Right ventricle myocardium inferior (tissue), 1 donor: ENCODE measurements at regions of chr1 and their contacts with region 1.

Region 1: DNA sequence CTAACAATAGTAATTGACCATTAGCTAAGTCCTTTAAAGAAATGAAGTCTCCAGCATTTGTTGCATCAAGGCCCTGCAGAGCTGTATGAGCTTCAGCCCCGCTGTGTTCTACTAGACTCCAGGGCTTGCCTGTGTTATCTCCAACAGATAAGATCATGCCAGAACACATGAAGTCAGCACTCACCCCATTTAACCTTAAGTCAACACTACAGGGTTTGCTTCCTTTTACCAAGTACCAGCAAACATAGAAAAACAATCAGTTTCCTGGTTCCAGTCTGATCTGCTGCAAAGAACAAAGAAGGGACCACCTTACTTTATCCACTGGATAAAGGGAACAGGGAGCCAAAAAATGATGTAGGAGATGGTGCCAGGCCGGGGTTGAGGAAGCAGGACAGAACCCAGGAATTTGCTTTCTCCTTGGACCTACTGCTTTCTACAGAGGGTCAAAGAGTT is 41.3 kb upstream of the ENAH start:
- DNase-seq: peak; percentile 74
- ATAC-seq: peak; percentile 96

Region 2: GRCh38 chr1:225441314-225442122 is 252.7 kb before region 1 on chr1:
- intact Hi-C with region 1: no loop called
- DNase-seq: no peak
- ATAC-seq: no peak

Region 3: DNA sequence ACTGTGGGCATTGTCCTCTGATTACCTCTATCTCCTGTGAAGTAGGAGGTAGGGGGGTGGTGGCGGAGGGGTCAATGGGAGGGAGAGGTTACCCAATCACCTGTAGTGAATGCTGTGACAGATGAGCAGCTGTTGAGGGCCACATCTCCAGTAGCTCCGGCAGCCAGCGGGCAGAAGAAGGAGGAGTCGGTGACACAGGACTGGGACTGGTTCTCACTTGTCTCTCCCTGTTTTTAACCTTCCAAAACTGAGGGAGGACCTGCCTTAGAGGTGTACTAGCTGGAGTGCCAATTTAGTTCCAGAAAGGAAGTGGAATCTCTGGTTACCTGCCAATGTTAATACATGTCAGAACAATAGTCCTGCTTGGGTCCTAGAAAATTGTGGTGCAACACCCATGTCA is 14.9 kb after region 1 on chr1:
- intact Hi-C with region 1: loop called (anchors 1 kb)
- DNase-seq: no peak
- ATAC-seq: no peak

Region 4: GRCh38 chr1:225733254-225733653 is 39.1 kb after region 1 on chr1:
- intact Hi-C with region 1: loop called (anchors 5 kb)
- DNase-seq: no peak
- ATAC-seq: no peak

Region 5: DNA sequence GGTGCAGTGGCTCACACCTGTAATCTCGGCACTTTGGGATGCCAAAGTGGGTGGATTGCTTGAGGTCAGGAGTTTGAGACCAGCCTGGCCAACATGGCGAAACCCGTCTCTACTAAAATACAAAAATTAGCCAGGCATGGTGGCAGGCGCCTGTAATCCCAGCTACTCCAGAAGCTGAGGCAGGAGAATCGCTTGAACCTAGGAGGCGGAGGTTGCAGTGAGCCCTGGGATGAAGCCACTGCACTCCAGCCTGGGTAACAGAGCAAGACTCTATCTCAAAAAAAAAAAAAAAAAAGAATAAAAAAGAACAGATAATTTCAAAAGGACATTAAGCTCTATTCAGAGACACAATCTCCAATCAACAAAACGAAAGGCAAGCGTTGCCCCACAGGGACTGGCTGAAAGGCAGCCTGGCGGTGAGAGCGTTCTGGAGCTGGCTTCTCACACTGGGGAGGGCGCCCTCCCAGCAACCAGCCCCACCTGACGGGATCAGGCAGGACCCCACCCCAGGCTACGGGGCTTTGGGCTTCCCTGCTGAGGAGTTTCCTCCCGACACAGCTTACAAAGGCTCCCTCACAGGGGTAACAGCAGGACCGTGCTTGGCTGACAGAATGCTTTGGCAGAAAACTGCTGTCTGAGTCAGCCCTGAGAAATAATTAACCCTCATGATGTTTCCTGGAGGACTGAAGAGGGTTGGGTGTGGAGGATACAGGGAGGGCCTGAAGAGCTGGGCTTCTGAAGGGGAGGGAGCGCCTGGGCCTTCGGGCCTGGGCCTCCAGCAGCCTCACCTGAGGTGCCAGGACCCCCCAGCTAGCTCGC is 52.4 kb after region 1 on chr1:
- intact Hi-C with region 1: loop called (anchors 5 kb)
- DNase-seq: peak; percentile 77
- ATAC-seq: peak; percentile 94

Region 6: DNA sequence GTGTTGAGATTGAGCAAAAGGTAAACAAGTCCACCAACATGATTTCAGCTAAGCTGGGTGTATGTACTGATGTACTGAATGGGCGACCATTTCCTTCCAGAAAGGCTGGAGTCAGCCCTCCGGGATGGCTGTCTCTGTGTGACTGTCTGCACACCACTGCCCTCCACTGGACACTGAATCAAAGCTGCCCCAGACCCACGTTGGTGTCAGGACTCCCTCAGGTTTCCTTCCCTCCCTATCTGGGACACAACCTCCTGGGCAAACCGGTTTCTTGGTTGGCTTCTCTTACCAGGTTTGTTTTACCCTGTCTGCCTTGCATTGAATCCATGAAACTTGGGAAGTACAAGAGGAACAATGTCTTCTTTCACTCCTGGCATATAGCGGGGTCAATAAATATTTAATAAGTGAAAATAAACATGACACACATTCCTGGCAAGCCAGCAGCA is 78.2 kb after region 1 on chr1:
- intact Hi-C with region 1: loop called (anchors 5 kb)
- DNase-seq: peak; percentile 77
- ATAC-seq: peak; percentile 88